Activated T-helper 2 cell treated with anti-CD3 and anti-CD28 coated beads, Interferon-gamma antibody, Interleukin-2, Interleukin-4, amounts not matched to agents 10 μg/mL and 5 μg/mL and 100 μg/mL, durations not matched to agents 14 hours and 24 hours and 36 hours (primary cell): ENCODE measurements at regions of chr12 and their contacts with region 1.

Region 1: GRCh38 chr12:3073438-3074250 is 3.5 kb upstream of the TSPAN9 start:
- DNase-seq: peak; percentile 72
- H3K4me3 Mint-ChIP-seq: no peak overlapping the region
- H3K27ac Mint-ChIP-seq: no peak overlapping the region
- H3K4me1 Mint-ChIP-seq: peaks cover 3% of the 10 kb centered on the region
- H3K27me3 Mint-ChIP-seq: peaks cover 19% of the 10 kb centered on the region

Region 2: DNA sequence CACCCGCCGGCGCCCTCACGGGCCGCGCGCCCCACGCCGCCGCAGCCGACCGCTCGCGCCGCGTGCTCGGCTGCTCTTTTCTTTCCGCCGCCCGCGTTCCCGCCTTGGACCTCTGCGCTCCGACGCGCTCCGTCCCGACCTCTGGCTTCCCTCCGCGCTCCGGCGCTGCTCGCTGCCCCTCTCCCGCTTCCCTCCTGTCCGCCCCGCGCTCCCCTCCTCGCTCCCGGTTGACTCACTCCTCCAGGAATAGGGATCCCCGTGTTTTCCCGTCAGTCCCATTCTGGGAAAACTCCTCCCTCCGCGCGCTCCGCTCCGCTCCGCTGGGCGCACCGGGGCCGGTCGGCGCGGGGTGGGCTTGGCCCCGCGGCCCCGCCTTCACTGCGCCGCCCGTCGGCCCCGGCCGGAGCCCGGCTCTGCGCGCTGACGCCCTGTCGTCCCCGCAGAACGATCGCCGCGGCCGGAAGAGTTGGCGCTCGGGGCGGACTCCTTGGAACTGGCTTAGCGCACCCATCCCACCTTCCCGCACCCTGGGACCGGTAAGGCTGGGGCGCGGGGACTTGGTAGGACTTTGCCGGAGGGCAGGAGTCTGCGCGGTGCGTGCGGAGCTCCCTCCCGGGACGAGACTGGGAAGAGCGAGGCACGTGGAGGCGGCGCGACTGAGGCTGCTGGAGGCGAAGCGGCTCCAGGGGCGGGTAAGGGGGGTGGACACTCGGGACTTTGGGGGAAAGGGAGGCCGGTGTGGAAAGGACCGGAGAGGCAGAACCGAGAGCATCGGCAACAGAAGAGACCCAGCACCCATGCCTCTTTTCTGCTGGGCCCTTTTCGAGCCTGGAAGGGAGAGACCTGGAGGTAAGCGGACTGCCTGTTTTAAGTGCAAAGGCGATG is 113.9 kb before region 1 on chr12:
- intact Hi-C with region 1: no loop called
- DNase-seq: no peak
- H3K4me3 Mint-ChIP-seq: peak overlapping the region; percentile 75
- H3K27ac Mint-ChIP-seq: no peak overlapping the region
- H3K4me1 Mint-ChIP-seq: peaks cover 12% of the 10 kb centered on the region
- H3K27me3 Mint-ChIP-seq: peaks cover 52% of the 10 kb centered on the region

Region 3: DNA sequence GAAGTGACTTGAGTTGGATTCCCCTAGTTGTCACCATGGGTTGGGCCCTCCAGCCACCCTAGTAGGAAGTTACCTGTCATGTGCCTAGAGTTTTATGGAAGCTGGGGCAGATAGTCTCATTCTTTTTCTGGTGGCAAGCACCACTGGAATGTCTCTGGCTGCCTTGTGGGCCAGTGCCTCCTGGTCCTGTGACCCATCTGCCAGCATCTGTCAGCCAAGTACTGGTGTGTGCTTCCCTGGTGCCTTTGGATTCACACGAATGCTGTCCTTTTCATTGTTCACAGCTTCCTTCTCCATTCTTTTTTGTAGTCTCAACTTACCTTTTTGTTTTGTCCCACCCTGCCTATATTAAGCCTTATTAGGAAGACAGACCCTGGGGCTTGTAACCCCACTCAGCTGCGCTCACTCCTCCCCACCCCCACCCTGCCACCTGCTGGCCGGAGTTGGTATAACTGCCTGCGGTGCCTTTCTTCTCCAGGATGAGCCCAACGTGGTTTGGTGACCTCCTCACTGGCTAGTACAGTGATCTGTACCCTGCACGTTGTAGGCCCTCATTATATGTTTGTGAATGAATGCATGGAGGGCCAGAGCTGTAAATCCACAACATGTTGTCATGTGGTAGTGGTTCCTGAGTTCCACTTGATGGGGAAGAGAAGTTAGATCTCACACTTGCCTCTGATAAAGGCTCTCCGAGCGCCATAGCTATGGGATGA is 129.2 kb after region 1 on chr12:
- intact Hi-C with region 1: loop called (anchors 5 kb)
- DNase-seq: no peak
- H3K4me3 Mint-ChIP-seq: no peak overlapping the region
- H3K27ac Mint-ChIP-seq: no peak overlapping the region
- H3K4me1 Mint-ChIP-seq: no peaks in the 10 kb centered on the region
- H3K27me3 Mint-ChIP-seq: peaks cover 31% of the 10 kb centered on the region

Region 4: DNA sequence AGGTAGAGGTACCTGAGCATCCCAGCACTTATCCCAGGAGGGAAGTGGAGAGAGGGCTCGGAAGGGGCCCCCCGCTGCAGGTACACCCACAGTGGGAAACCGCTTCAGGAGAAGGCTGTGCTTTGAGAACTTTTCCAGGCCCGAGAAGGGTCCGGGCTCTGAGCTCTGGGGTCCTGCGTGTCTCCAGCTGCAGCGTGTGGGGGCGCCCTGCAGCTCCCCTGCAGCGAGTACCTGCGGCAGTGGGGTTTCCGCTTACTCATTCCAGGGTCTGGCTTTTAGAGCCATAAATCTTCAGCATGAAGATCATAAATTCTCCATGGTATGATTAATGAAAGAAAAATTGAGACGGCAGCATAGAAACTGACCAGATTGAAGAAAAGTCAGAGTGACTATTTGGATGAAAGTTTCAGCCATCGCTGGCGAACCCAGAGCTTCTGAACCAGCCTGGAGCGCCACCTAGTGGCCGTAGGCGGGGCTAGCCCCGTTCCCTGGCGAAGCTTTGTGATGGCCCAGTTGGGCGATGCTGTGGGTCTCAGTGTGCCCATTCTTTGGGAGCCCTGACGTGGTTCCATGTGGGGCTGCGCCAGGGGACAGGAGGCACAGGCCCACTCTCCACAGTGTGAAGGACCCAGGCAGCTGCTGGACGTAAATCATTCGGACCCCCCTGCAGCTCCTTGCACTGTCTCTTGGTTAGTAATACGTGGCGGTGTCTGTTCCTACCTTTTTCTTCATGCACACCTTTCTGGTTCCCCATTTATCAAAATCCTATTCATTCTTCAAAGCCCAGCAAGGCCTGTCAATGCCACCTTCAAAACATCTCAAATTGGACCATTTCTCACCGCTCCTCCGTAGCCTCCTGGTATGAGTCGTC is 201.8 kb after region 1 on chr12:
- intact Hi-C with region 1: loop called (anchors 1 kb)
- DNase-seq: peak; percentile 52
- H3K4me3 Mint-ChIP-seq: no peak overlapping the region
- H3K27ac Mint-ChIP-seq: no peak overlapping the region
- H3K4me1 Mint-ChIP-seq: no peaks in the 10 kb centered on the region
- H3K27me3 Mint-ChIP-seq: peaks cover 2% of the 10 kb centered on the region